Activated CD4-positive, alpha-beta T cell treated with anti-CD3 and anti-CD28 coated beads, Interleukin-2, amount 10 ng/mL, durations not matched to agents 7 days and 5 days (primary cell): ENCODE measurements at regions of chr9 and their contacts with region 1.

Region 1: DNA sequence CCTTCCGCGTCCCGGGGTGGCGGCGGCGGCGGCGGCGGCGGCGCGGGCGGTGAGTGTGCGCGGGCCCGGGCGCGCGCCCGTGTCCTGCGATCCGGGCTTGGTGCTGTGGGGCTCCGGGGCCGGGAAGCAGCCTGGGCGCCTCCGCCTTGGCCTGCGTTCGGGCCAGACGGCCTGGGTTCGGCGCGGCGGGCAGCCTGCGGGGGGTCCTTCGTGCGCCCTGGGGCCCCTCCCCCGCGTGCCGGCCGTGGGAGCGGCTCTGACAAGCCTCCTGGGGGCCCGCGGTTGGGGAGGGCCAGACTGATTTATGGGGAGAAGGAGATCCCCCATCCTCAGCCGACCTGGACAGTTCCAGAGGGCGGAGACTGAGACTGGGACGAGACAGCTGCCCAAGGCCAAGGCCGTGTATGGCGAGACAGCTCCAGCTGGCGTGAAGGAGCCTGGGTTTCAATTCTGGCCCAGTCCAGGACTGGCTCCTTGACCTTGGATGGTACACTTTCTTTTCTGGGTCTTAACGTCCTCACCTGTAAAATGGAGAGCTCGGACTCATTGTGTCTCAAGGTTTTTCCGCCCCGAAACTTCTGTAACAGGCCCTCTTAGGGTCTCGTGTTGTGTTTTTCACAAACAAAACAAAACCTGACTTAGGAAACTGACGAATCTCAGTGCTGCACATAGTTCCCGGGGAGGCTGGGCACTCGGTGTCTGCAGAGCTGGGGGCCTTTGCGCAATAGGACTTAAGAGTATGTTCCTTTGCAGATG is 603 bp downstream of the TMEM268 start:
- DNase-seq: peak; percentile 30
- H3K4me3 Mint-ChIP-seq: peak overlapping the region; percentile 75
- H3K27ac Mint-ChIP-seq: peak overlapping the region; percentile 93
- H3K4me1 Mint-ChIP-seq: peaks cover 54% of the 10 kb centered on the region
- H3K27me3 Mint-ChIP-seq: no peaks in the 10 kb centered on the region

Region 2: GRCh38 chr9:114574438-114574837 is 37.3 kb before region 1 on chr9:
- CTCF ChIA-PET with region 1: no interaction called
- POLR2A ChIA-PET with region 1: no interaction called
- DNase-seq: no peak
- H3K4me3 Mint-ChIP-seq: no peak overlapping the region
- H3K27ac Mint-ChIP-seq: no peak overlapping the region
- H3K4me1 Mint-ChIP-seq: no peaks in the 10 kb centered on the region
- H3K27me3 Mint-ChIP-seq: peaks cover 2% of the 10 kb centered on the region

Region 3: GRCh38 chr9:114587385-114588202 is 24.1 kb before region 1 on chr9 and contains the start of gene ATP6V1G1:
- CTCF ChIA-PET with region 1: interaction called, 23 read pairs
- POLR2A ChIA-PET with region 1: no interaction called
- DNase-seq: peak; percentile 100
- H3K4me3 Mint-ChIP-seq: peak within 1 kb of the TSS; percentile 99
- H3K27ac Mint-ChIP-seq: peak within 1 kb of the TSS; percentile 97
- H3K4me1 Mint-ChIP-seq: peaks cover 49% of the 10 kb centered on the region
- H3K27me3 Mint-ChIP-seq: peaks cover 2% of the 10 kb centered on the region
- total RNA-seq, gene ATP6V1G1: 89.0 to 94.8 TPM